CD14-positive monocyte (primary cell): ENCODE measurements at regions of chr5 and their contacts with region 1.

Region 1: GRCh38 chr5:167723254-167723871 is 568.1 kb upstream of the WWC1 start:
- DNase-seq: peak; percentile 54 to 72 (median 71)
- H3K4me3 ChIP-seq: no peak overlapping the region
- H3K4me3 Mint-ChIP-seq: peak overlapping the region in 1 of 2 donors; percentile 46
- H3K27ac ChIP-seq: no peak overlapping the region
- H3K27ac Mint-ChIP-seq: no peak overlapping the region
- H3K4me1 ChIP-seq: no peaks in the 10 kb centered on the region
- H3K4me1 Mint-ChIP-seq: peaks cover 6% of the 10 kb centered on the region
- H3K27me3 ChIP-seq: peaks cover 0 to 4% of the 10 kb centered on the region in 2 donors
- H3K27me3 Mint-ChIP-seq: peaks cover 0 to 9% (median 3%) of the 10 kb centered on the region in 3 donors
- CTCF ChIP-seq: peak; percentile 93

Region 2: DNA sequence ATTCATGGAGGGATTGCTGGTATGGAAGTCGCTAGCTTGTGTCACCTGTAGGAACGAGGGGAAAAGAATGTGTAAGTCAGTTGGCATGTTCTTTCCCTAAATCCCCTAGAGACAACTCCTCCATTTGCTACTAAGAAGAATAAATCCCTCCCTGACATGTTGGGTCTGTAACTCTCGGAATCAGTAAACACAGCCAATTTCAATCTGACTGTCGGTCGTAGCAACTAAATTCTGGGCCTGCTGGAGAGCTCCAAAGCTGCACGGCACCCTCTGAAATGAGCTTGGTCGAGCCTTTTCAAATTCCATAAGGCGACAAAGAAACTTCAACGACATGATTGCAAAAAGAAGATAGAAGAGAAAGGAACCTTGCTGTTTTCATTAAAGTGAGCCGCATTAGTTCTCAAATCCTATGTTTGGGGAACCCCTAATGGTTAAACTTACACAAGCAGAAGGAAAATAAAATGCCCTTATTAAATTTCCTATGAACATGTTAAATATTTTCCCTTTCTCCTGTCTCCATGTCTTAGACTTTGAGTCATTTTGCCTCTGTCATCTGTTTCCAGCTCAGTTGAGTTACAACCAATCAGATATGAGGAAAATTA is 167.7 kb before region 1 on chr5:
- intact Hi-C with region 1: no loop called
- DNase-seq: no peak
- H3K4me3 ChIP-seq: no peak overlapping the region
- H3K4me3 Mint-ChIP-seq: no peak overlapping the region
- H3K27ac ChIP-seq: no peak overlapping the region
- H3K27ac Mint-ChIP-seq: no peak overlapping the region
- H3K4me1 ChIP-seq: no peaks in the 10 kb centered on the region
- H3K4me1 Mint-ChIP-seq: no peaks in the 10 kb centered on the region
- H3K27me3 ChIP-seq: no peaks in the 10 kb centered on the region
- H3K27me3 Mint-ChIP-seq: peaks cover 0 to 2% (median 1%) of the 10 kb centered on the region in 3 donors
- CTCF ChIP-seq: no peak

Region 3: GRCh38 chr5:167658889-167659288 is 64.5 kb before region 1 on chr5:
- intact Hi-C with region 1: no loop called
- DNase-seq: no peak
- H3K4me3 ChIP-seq: no peak overlapping the region
- H3K4me3 Mint-ChIP-seq: no peak overlapping the region
- H3K27ac ChIP-seq: no peak overlapping the region
- H3K27ac Mint-ChIP-seq: no peak overlapping the region
- H3K4me1 ChIP-seq: no peaks in the 10 kb centered on the region
- H3K4me1 Mint-ChIP-seq: no peaks in the 10 kb centered on the region
- H3K27me3 ChIP-seq: no peaks in the 10 kb centered on the region
- H3K27me3 Mint-ChIP-seq: no peaks in the 10 kb centered on the region
- CTCF ChIP-seq: no peak

Region 4: GRCh38 chr5:167820101-167820990 is 97.0 kb after region 1 on chr5:
- intact Hi-C with region 1: loop called in 1 of 2 experiments (anchors 10 kb)
- DNase-seq: no peak
- H3K4me3 ChIP-seq: no peak overlapping the region
- H3K4me3 Mint-ChIP-seq: no peak overlapping the region
- H3K27ac ChIP-seq: no peak overlapping the region
- H3K27ac Mint-ChIP-seq: no peak overlapping the region
- H3K4me1 ChIP-seq: peaks cover 12 to 14% of the 10 kb centered on the region in 2 donors
- H3K4me1 Mint-ChIP-seq: peaks cover 15% of the 10 kb centered on the region
- H3K27me3 ChIP-seq: no peaks in the 10 kb centered on the region
- H3K27me3 Mint-ChIP-seq: peaks cover 0 to 7% (median 4%) of the 10 kb centered on the region in 3 donors
- CTCF ChIP-seq: no peak

Region 5: DNA sequence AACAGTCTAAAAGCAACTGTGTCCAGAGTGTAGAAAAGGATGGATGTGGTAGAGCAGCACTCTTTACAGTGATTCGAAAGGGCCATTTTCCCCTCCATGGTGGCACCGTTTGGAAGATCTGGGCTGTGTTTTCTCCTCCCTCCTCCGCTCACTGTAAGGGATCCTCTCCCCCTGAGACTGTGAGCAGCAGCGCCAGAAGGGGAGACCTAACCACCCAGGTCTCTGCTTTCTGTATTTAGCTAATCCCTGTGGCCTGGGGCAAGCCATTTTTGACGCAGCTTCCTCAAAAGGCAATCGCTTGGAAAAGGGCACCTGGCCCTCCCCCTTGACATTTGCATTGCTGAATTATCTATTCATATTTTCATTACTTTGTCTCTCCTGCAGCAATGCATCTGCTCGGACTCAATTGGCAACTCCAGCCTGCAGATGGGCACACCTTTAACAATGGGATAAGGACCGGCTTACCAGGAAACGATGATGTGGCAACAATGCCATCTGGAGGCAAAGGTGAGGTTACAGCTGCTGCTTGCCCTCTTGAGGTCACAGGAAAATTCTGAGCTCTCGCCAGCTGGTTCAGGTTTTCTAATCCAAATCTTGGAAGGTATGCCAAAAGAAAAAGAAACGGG is 323.8 kb after region 1 on chr5:
- intact Hi-C with region 1: loop called in 1 of 2 experiments (anchors 5 kb)
- DNase-seq: peak in 2 of 3 donors; percentile 6 to 15
- H3K4me3 ChIP-seq: no peak overlapping the region
- H3K4me3 Mint-ChIP-seq: no peak overlapping the region
- H3K27ac ChIP-seq: no peak overlapping the region
- H3K27ac Mint-ChIP-seq: no peak overlapping the region
- H3K4me1 ChIP-seq: no peaks in the 10 kb centered on the region
- H3K4me1 Mint-ChIP-seq: no peaks in the 10 kb centered on the region
- H3K27me3 ChIP-seq: no peaks in the 10 kb centered on the region
- H3K27me3 Mint-ChIP-seq: peaks cover 1 to 6% (median 4%) of the 10 kb centered on the region in 3 donors
- CTCF ChIP-seq: no peak

Region 6: GRCh38 chr5:168219515-168220410 is 496.4 kb after region 1 on chr5:
- intact Hi-C with region 1: loop called (anchors 2 to 5 kb)
- DNase-seq: peak; percentile 45 to 82 (median 72)
- H3K4me3 ChIP-seq: peak overlapping the region in 1 of 3 experiments; percentile 23
- H3K4me3 Mint-ChIP-seq: peak overlapping the region in 1 of 2 donors; percentile 30
- H3K27ac ChIP-seq: no peak overlapping the region
- H3K27ac Mint-ChIP-seq: no peak overlapping the region
- H3K4me1 ChIP-seq: peaks cover 0 to 4% of the 10 kb centered on the region in 2 donors
- H3K4me1 Mint-ChIP-seq: peaks cover 3% of the 10 kb centered on the region
- H3K27me3 ChIP-seq: peaks cover 0 to 2% of the 10 kb centered on the region in 2 donors
- H3K27me3 Mint-ChIP-seq: peaks cover 5 to 10% (median 6%) of the 10 kb centered on the region in 3 donors
- CTCF ChIP-seq: peak; percentile 85